ENCODE measurements at regions of chr5 and their contacts with region 1.

Region 1: GRCh38 chr5:15003511-15003920 is 131.9 kb upstream of the ANKH start:
- DNase-seq: peak; percentile 87

Region 2: GRCh38 chr5:14706615-14707021 is 296.9 kb before region 1 on chr5:
- in situ Hi-C with region 1: loop called (anchors 25 kb)
- DNase-seq: peak; percentile 49

Region 3: DNA sequence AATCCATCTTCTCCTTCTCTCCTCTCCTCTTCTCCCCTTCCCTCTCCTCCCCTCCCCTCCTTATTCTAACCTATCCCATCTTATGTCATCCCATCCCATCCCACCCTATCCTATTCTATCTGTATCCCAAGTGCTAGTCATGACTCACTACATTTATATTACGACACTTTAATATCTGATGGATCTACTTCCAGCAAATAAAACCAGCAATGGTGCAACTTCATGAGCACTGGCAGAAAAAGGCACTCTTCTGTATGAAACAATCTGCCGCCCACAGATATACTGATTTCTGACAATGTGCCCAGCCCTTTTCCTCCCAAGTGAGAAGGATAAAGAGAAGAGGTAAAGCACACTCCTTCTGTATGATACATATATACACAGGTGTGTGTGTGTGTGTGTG is 45.3 kb before region 1 on chr5:
- in situ Hi-C with region 1: loop called (anchors 5 kb)
- DNase-seq: no peak

Measured in SK-MEL-5 (cell line).